GM12878 (cell line): ENCODE measurements at regions of chr18 and their contacts with region 1.

Region 1: DNA sequence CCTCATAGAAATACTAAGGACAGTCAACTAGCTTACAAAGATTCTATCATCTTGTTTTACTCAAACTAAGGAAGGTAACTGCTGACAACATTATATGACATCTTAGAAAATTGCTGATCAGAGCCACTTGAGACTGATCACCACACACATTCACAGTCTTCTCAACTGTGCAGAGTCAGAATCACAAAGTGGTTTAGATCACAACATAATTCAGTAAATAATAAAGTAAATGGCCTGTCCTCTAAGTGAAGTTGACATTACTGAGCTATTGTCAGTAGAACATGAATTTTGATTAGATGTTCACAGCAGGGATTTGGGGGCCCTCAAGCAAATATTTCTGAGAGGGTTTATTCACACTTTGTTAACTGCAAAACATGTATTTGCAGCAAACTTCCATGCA is 28.5 kb downstream of the NOL4 start:
- DNase-seq: no peak
- ATAC-seq: peak; percentile 35; the same call in 2 of the 3 replicates
- H3K4me3 ChIP-seq: no peak overlapping the region
- H3K27ac ChIP-seq: no peak overlapping the region
- H3K4me1 ChIP-seq: no peaks in the 10 kb centered on the region
- H3K27me3 ChIP-seq: no peaks in the 10 kb centered on the region
- CTCF ChIP-seq: no peak
- EP300 ChIP-seq: no peak
- POLR2A ChIP-seq: no peak
- RAD21 ChIP-seq: no peak

Region 2: GRCh38 chr18:34207344-34207851 is 11.1 kb after region 1 on chr18:
- CTCF ChIA-PET with region 1: interaction called, 9 read pairs
- POLR2A ChIA-PET with region 1: interaction called, 5 read pairs
- RAD21 ChIA-PET with region 1: interaction called, 11 read pairs
- SMC1A ChIA-PET with region 1: interaction called, 11 read pairs
- in situ Hi-C with region 1: no loop called
- intact Hi-C with region 1: no loop called
- DNase-seq: no peak
- ATAC-seq: peak; percentile 52
- H3K4me3 ChIP-seq: no peak overlapping the region
- H3K27ac ChIP-seq: no peak overlapping the region
- H3K4me1 ChIP-seq: no peaks in the 10 kb centered on the region
- H3K27me3 ChIP-seq: no peaks in the 10 kb centered on the region
- CTCF ChIP-seq: no peak
- EP300 ChIP-seq: no peak
- POLR2A ChIP-seq: no peak
- RAD21 ChIP-seq: no peak

Region 3: DNA sequence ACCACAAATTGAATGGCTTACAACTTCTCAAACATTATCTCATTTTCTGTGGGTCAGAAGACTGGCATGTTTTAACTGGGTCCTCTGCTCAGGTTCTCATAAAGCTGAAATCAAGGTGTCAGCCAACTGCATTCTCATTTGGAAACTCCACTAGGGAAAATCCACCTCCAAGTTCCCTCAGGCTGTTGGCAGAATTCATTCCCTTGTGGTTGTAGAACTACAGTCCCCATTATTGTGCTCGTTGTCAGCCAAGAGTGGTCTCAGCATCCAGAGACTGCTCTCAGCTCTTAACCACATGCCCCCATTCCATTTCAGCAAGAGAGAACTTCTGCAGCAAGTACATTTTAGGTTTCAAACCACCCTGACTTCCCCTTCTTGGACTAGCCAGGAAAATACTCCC is 16.3 kb after region 1 on chr18:
- CTCF ChIA-PET with region 1: interaction called, 9 read pairs
- POLR2A ChIA-PET with region 1: interaction called, 5 read pairs
- RAD21 ChIA-PET with region 1: interaction called, 11 read pairs
- SMC1A ChIA-PET with region 1: interaction called, 11 read pairs
- in situ Hi-C with region 1: no loop called
- intact Hi-C with region 1: no loop called
- DNase-seq: no peak
- ATAC-seq: peak; percentile 51
- H3K4me3 ChIP-seq: no peak overlapping the region
- H3K27ac ChIP-seq: no peak overlapping the region
- H3K4me1 ChIP-seq: no peaks in the 10 kb centered on the region
- H3K27me3 ChIP-seq: no peaks in the 10 kb centered on the region
- CTCF ChIP-seq: no peak
- EP300 ChIP-seq: no peak
- POLR2A ChIP-seq: no peak
- RAD21 ChIP-seq: no peak